PC-3 (cell line): ENCODE measurements at regions of chr1 and their contacts with region 1.

Region 1: GRCh38 chr1:27436204-27437159 is 44.1 kb downstream of the GPR3 start:
- DNase-seq: peak; percentile 75
- ATAC-seq: peak; percentile 93
- H3K4me3 ChIP-seq: peak overlapping the region; percentile 4; the same call in 1 of the 2 replicates
- H3K27ac ChIP-seq: peak overlapping the region; percentile 52
- H3K4me1 ChIP-seq: peaks cover 33% of the 10 kb centered on the region
- H3K27me3 ChIP-seq: no peaks in the 10 kb centered on the region
- CTCF ChIP-seq: no peak

Region 2: GRCh38 chr1:27481994-27482620 is 45.6 kb after region 1 on chr1:
- CTCF ChIA-PET with region 1: no interaction called
- POLR2A ChIA-PET with region 1: interaction called, 11 read pairs
- intact Hi-C with region 1: loop called (anchors 5 kb)
- DNase-seq: no peak
- ATAC-seq: peak; percentile 49
- H3K4me3 ChIP-seq: no peak overlapping the region
- H3K27ac ChIP-seq: no peak overlapping the region
- H3K4me1 ChIP-seq: peaks cover 7% of the 10 kb centered on the region; the same call in 1 of the 2 replicates
- H3K27me3 ChIP-seq: no peaks in the 10 kb centered on the region
- CTCF ChIP-seq: no peak